ENCODE measurements at regions of chr2 and their contacts with region 1.

Region 1: GRCh38 chr2:19362755-19363473 is 4.5 kb upstream of the OSR1 start:
- DNase-seq: peak; percentile 86
- H3K4me3 ChIP-seq: peak overlapping the region; percentile 53 to 78 (median 60)
- H3K27ac ChIP-seq: peak overlapping the region in 6 of 8 donors; percentile 6 to 55 (median 34)
- H3K4me1 ChIP-seq: peaks cover 3 to 49% (median 37%) of the 10 kb centered on the region in 6 donors
- H3K27me3 ChIP-seq: peaks cover 0 to 77% (median 49%) of the 10 kb centered on the region in 7 donors
- CTCF ChIP-seq: peak; percentile 22 to 81 (median 64)
- POLR2A ChIP-seq: no peak

Region 2: GRCh38 chr2:18520451-18521425 is 842.2 kb before region 1 on chr2:
- intact Hi-C with region 1: loop called (anchors 10 kb)
- DNase-seq: peak; percentile 87
- H3K4me3 ChIP-seq: no peak overlapping the region
- H3K27ac ChIP-seq: no peak overlapping the region
- H3K4me1 ChIP-seq: no peaks in the 10 kb centered on the region
- H3K27me3 ChIP-seq: peaks cover 0 to 36% (median 0%) of the 10 kb centered on the region in 7 donors
- CTCF ChIP-seq: peak; percentile 72 to 88 (median 77)
- POLR2A ChIP-seq: no peak

Region 3: GRCh38 chr2:18749912-18750526 is 612.9 kb before region 1 on chr2:
- intact Hi-C with region 1: loop called (anchors 5 kb)
- DNase-seq: no peak
- H3K4me3 ChIP-seq: no peak overlapping the region
- H3K27ac ChIP-seq: no peak overlapping the region
- H3K4me1 ChIP-seq: no peaks in the 10 kb centered on the region
- H3K27me3 ChIP-seq: no peaks in the 10 kb centered on the region
- CTCF ChIP-seq: peak in 10 of 11 experiments; percentile 17 to 63 (median 54)
- POLR2A ChIP-seq: no peak